B cell (primary cell): ENCODE measurements at regions of chr18 and their contacts with region 1.

Region 1: DNA sequence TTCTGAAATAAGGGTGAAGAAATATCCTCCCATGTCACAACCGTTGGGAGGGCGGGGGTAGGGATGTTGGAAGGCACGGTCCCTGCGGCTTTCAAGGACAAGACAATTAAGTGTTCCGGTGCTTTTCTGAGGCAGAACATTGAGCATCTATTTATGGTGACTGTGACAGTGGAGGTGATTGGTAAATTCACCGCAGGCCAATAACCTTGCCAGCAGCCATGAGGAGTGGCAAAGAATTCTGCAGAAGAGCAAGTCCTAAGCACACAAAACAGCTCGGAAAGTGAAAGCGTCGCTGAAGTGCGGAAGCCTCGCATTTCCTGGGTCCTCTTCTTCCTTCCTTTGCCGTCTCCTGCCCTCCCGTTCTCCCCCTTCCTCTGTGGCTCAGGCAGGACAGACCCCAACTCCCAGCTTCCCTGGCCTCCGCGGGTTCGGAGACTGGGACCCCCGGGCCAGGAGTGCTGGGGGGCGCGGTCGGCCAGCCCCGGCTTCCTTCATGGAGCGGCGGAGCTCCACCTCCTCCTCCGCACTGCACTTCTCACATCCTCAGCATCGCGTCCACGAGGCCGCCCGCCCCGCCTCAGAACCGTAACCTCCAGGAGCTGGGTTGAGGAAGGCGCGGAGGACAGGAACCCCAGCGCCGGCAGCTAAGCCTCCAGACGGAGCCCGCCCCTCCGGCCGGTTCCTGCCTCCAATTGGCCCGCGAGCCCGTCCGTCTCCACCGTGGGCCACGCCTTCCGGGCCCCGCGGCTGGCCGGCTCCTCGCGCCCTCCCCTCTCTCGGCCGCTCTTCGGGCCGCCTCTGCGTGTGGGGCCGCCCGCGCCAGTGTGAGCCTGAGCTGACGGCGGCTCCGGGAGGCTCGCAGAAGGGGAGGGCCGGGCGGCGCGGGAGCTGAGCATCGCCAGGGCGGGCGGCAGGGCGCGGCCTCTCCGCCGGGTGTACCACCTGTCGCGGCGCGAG is at the start of gene ME2:
- DNase-seq: peak; percentile 94
- ATAC-seq: peak; percentile 93
- H3K4me3 ChIP-seq: peak within 1 kb of the TSS; percentile 80 to 95 (median 90)
- H3K4me3 Mint-ChIP-seq: peak within 1 kb of the TSS; percentile 98
- H3K27ac ChIP-seq: peak within 1 kb of the TSS; percentile 96 to 98
- H3K27ac Mint-ChIP-seq: peak within 1 kb of the TSS; percentile 99
- H3K4me1 ChIP-seq: peaks cover 20 to 25% of the 10 kb centered on the region in 2 donors
- H3K4me1 Mint-ChIP-seq: peaks cover 30% of the 10 kb centered on the region
- H3K27me3 ChIP-seq: no peaks in the 10 kb centered on the region
- H3K27me3 Mint-ChIP-seq: peaks cover 3% of the 10 kb centered on the region
- CTCF ChIP-seq: no peak
- total RNA-seq, gene ME2: 55.4 and 57.8 TPM in 2 replicates

Region 2: GRCh38 chr18:50665519-50665918 is 213.1 kb before region 1 on chr18:
- CTCF ChIA-PET with region 1: no interaction called
- POLR2A ChIA-PET with region 1: no interaction called
- intact Hi-C with region 1: no loop called
- DNase-seq: no peak
- ATAC-seq: no peak
- H3K4me3 ChIP-seq: no peak overlapping the region
- H3K4me3 Mint-ChIP-seq: no peak overlapping the region
- H3K27ac ChIP-seq: no peak overlapping the region
- H3K27ac Mint-ChIP-seq: no peak overlapping the region
- H3K4me1 ChIP-seq: no peaks in the 10 kb centered on the region
- H3K4me1 Mint-ChIP-seq: no peaks in the 10 kb centered on the region
- H3K27me3 ChIP-seq: no peaks in the 10 kb centered on the region
- H3K27me3 Mint-ChIP-seq: peaks cover 12% of the 10 kb centered on the region
- CTCF ChIP-seq: no peak

Region 3: DNA sequence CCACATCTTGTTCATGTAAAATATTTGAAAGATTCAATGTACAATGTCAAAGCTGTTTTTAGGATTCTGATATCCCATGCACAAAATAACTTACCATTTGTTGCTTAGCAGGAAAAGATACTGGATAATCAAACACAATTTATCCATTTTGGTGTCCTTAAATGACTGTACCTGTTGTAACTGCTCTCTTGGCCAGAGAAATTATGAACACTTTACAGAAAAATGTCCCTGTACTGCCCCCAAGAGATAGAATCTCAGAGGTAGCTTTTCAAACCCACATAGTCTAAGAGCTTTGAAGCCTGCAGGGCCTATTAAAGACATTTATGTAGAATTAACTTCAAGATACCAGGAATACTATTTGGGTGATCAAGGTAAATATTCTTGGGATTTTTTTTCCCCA is 11.9 kb before region 1 on chr18:
- CTCF ChIA-PET with region 1: interaction called, 4 read pairs
- POLR2A ChIA-PET with region 1: interaction called, 10 read pairs
- intact Hi-C with region 1: no loop called
- DNase-seq: peak; percentile 17
- ATAC-seq: no peak
- H3K4me3 ChIP-seq: no peak overlapping the region
- H3K4me3 Mint-ChIP-seq: no peak overlapping the region
- H3K27ac ChIP-seq: no peak overlapping the region
- H3K27ac Mint-ChIP-seq: no peak overlapping the region
- H3K4me1 ChIP-seq: peaks cover 11 to 12% of the 10 kb centered on the region in 2 donors
- H3K4me1 Mint-ChIP-seq: peaks cover 9% of the 10 kb centered on the region
- H3K27me3 ChIP-seq: no peaks in the 10 kb centered on the region
- H3K27me3 Mint-ChIP-seq: no peaks in the 10 kb centered on the region
- CTCF ChIP-seq: no peak

Region 4: GRCh38 chr18:50967714-50968661 is 89.4 kb after region 1 on chr18 and contains the start of gene ELAC1:
- CTCF ChIA-PET with region 1: no interaction called
- POLR2A ChIA-PET with region 1: interaction called, 18 read pairs
- intact Hi-C with region 1: loop called (anchors 1 kb)
- DNase-seq: peak; percentile 86
- ATAC-seq: peak; percentile 95
- H3K4me3 ChIP-seq: peak within 1 kb of the TSS; percentile 65 to 90 (median 82)
- H3K4me3 Mint-ChIP-seq: peak within 1 kb of the TSS; percentile 93
- H3K27ac ChIP-seq: peak within 1 kb of the TSS; percentile 80 to 95
- H3K27ac Mint-ChIP-seq: peak within 1 kb of the TSS; percentile 92
- H3K4me1 ChIP-seq: peaks cover 9 to 14% of the 10 kb centered on the region in 2 donors
- H3K4me1 Mint-ChIP-seq: peaks cover 20% of the 10 kb centered on the region
- H3K27me3 ChIP-seq: no peaks in the 10 kb centered on the region
- H3K27me3 Mint-ChIP-seq: no peaks in the 10 kb centered on the region
- CTCF ChIP-seq: no peak
- total RNA-seq, gene ELAC1: 9.9 and 10.0 TPM in 2 replicates

Region 5: GRCh38 chr18:51029694-51030536 is 151.3 kb after region 1 on chr18 and contains the start of gene SMAD4:
- CTCF ChIA-PET with region 1: interaction called, 7 read pairs
- POLR2A ChIA-PET with region 1: interaction called, 24 read pairs
- intact Hi-C with region 1: loop called (anchors 1 kb)
- DNase-seq: peak; percentile 97
- ATAC-seq: peak; percentile 83
- H3K4me3 ChIP-seq: peak within 1 kb of the TSS; percentile 61 to 81 (median 74)
- H3K4me3 Mint-ChIP-seq: peak within 1 kb of the TSS; percentile 97
- H3K27ac ChIP-seq: peak within 1 kb of the TSS; percentile 78 to 84
- H3K27ac Mint-ChIP-seq: peak within 1 kb of the TSS; percentile 99
- H3K4me1 ChIP-seq: peaks cover 22 to 42% of the 10 kb centered on the region in 2 donors
- H3K4me1 Mint-ChIP-seq: peaks cover 53% of the 10 kb centered on the region
- H3K27me3 ChIP-seq: no peaks in the 10 kb centered on the region
- H3K27me3 Mint-ChIP-seq: no peaks in the 10 kb centered on the region
- CTCF ChIP-seq: no peak
- total RNA-seq, gene SMAD4: 136 and 146 TPM in 2 replicates